ENCODE measurements at regions of chr4 and their contacts with region 1.

Region 1: DNA sequence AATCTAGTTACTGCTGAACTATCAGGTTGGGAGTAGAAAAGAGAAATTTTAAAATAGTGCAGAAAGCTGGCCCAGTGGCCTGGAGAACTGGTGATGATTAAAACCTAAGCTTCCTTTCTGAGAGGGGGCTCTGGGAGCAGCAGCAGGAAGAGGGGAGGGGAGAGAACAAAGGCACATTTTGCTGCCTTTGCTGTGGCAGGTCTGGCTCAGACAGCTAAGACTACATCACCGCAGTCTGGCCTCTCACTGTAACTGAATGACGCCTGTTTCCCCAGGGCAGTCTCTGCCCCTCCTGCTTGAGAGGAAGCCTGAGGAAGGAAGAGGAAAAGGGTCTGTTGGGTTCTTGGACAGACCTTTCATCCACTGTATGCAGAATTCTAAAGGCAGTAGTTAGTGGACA is 148.5 kb downstream of the FRAS1 start:
- DNase-seq: no peak
- ATAC-seq: no peak
- H3K4me3 ChIP-seq: no peak overlapping the region
- H3K27ac ChIP-seq: no peak overlapping the region
- H3K4me1 ChIP-seq: no peaks in the 10 kb centered on the region
- H3K27me3 ChIP-seq: no peaks in the 10 kb centered on the region; the same call in 1 of the 2 replicates
- CTCF ChIP-seq: no peak
- POLR2A ChIP-seq: no peak
- RAD21 ChIP-seq: no peak

Region 2: DNA sequence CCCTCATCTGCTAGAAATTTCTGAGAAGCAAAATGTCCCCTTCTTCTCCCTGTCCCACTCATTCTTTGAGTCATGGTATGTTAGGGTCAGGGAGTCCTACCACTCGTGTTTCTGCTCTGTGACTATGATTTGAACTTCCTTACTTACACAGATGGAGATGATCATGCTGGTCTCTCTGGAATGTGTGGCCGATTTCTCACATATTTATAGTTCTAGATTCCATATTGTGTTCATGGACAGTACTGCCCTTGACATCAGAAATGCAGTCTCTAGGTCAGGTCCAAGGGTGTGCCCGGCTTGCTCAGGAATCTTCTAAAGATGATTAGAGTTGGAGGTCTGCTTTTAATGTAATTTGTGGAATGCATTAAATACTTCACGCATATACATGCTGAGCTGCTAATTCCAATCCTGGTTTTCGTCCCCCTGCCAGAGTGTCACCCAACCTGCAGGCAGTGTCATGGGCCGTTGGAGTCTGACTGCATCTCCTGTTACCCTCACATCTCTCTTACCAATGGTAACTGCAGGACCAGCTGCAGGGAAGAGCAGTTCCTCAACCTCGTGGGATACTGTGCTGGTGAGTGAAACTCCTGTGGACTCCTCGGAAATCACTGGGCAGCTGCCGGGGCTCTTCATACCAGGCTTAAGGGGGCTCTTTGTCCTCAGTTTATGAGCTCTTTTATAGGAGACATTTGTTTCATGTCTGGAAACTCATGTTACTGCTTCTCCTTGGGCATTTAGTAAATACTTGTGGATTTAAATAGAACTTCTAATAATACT is 131.8 kb after region 1 on chr4:
- CTCF ChIA-PET with region 1: no interaction called
- POLR2A ChIA-PET with region 1: no interaction called
- dilution Hi-C with region 1: no loop called
- in situ Hi-C with region 1: no loop called
- intact Hi-C with region 1: no loop called
- DNase-seq: no peak
- ATAC-seq: no peak
- H3K4me3 ChIP-seq: no peak overlapping the region
- H3K27ac ChIP-seq: no peak overlapping the region
- H3K4me1 ChIP-seq: no peaks in the 10 kb centered on the region
- H3K27me3 ChIP-seq: peaks cover 9% of the 10 kb centered on the region
- CTCF ChIP-seq: no peak
- POLR2A ChIP-seq: no peak
- RAD21 ChIP-seq: no peak

Region 3: GRCh38 chr4:78845472-78845871 is 639.9 kb after region 1 on chr4:
- CTCF ChIA-PET with region 1: no interaction called
- POLR2A ChIA-PET with region 1: no interaction called
- dilution Hi-C with region 1: no loop called
- in situ Hi-C with region 1: no loop called
- intact Hi-C with region 1: loop called (anchors 10 kb)
- DNase-seq: no peak
- ATAC-seq: no peak
- H3K4me3 ChIP-seq: no peak overlapping the region
- H3K27ac ChIP-seq: no peak overlapping the region
- H3K4me1 ChIP-seq: no peaks in the 10 kb centered on the region
- H3K27me3 ChIP-seq: no peaks in the 10 kb centered on the region
- CTCF ChIP-seq: no peak
- POLR2A ChIP-seq: no peak
- RAD21 ChIP-seq: no peak

Measured in IMR-90 (cell line).